ENCODE measurements at regions of chr1 and their contacts with region 1.

Region 1: GRCh38 chr1:205775015-205775716 is at the start of gene RAB29:
- DNase-seq: peak; percentile 70 to 95 (median 80)
- ATAC-seq: peak; percentile 89
- H3K4me3 ChIP-seq: peak within 1 kb of the TSS; percentile 78
- H3K4me3 Mint-ChIP-seq: peak within 1 kb of the TSS; percentile 96
- H3K27ac ChIP-seq: peak within 1 kb of the TSS; percentile 87 to 90
- H3K27ac Mint-ChIP-seq: peak within 1 kb of the TSS; percentile 97
- H3K4me1 ChIP-seq: peaks cover 37% of the 10 kb centered on the region
- H3K4me1 Mint-ChIP-seq: peaks cover 61% of the 10 kb centered on the region
- H3K27me3 ChIP-seq: no peaks in the 10 kb centered on the region
- H3K27me3 Mint-ChIP-seq: no peaks in the 10 kb centered on the region
- CTCF ChIP-seq: no peak
- total RNA-seq, gene RAB29: 11.7 to 11.8 TPM

Region 2: DNA sequence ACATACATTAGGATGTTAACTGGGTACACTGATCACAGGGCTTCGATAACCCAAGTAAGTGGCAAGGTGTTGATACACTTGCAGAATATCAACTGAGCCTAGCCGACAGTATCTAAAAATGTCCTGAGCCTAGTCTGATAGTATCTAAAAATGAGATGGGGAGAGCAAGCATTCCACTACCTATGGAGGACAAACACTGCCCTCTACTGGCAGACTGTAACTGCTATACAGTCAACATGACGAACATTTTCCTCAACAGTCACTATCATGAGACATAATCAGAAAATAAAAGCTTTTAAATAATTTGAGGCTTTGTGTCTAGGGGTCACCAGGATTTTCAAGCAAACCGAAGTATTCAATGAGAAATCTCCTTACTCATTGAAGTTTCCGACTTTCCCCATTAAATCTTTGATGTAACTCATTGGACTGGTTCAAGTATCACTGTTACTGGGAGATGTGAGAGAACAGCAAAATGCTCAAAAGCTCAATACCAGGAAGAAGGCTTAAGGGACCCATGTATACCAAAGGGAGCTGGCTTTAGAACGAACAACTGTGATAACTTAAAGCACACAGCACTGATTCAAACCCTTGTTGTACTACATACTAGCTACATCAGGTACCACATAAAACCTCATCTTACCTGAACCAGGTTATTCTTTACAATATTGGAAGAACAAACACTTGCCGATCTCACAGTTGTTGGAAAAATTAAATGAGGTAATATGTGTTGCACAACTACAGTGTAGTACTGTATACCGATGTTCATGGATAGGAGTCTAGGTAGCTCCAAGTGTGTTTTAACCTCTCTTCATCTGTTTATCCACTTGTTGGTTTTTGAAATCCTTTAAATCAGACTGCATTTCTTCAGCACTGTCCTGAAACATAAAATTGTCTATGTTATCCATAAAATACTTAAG is 63.8 kb before region 1 on chr1:
- CTCF ChIA-PET with region 1: interaction called, 11 read pairs
- POLR2A ChIA-PET with region 1: interaction called, 12 read pairs
- intact Hi-C with region 1: loop called (anchors 2 to 5 kb)
- DNase-seq: peak in 12 of 14 experiments; percentile 16 to 87 (median 47)
- ATAC-seq: peak; percentile 95
- H3K4me3 ChIP-seq: no peak overlapping the region
- H3K4me3 Mint-ChIP-seq: no peak overlapping the region
- H3K27ac ChIP-seq: no peak overlapping the region
- H3K27ac Mint-ChIP-seq: peak overlapping the region; percentile 47
- H3K4me1 ChIP-seq: no peaks in the 10 kb centered on the region
- H3K4me1 Mint-ChIP-seq: peaks cover 40% of the 10 kb centered on the region
- H3K27me3 ChIP-seq: no peaks in the 10 kb centered on the region
- H3K27me3 Mint-ChIP-seq: no peaks in the 10 kb centered on the region
- CTCF ChIP-seq: peak; percentile 91

Region 3: DNA sequence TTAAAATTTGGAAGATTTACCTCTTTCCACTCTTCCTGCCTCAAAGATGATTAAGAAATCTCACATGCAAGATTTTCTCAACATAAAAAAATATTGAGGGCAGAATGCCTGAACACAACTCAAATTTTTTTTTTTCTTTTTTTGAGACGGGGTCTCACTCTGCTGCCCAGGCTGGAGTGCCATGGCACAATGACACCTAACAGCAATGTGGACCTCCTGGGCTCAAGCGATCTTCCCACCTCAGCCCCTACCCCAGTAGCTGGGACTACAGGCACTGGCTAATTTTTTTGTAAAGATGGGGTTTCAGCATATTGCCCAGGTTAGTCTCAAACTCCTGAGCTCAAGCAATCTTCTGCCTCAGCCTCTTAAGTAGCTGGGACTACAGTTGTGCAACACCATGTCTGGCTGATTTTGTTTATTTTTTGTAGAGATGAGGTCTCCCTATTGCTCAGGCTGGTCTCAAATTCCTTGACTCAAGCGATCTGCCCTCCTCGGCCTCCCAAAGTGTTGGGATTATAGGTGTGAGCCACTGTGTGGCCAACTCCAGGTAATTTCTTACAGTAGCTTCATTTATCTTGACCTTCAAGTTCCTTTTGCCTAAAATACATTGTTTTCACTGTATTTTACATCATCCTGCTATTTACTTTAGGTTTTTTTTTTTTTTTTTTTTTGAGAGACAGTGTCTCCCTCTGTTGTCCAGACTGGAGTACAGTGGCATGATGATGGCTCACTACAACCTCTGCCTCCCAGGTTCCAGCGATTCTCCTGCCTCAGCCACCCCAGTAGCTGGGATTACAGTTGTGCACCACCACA is 35.6 kb before region 1 on chr1:
- CTCF ChIA-PET with region 1: interaction called, 3 read pairs
- POLR2A ChIA-PET with region 1: interaction called, 5 read pairs
- intact Hi-C with region 1: loop called in 1 of 2 experiments (anchors 5 kb)
- DNase-seq: no peak
- ATAC-seq: no peak
- H3K4me3 ChIP-seq: no peak overlapping the region
- H3K4me3 Mint-ChIP-seq: no peak overlapping the region
- H3K27ac ChIP-seq: no peak overlapping the region
- H3K27ac Mint-ChIP-seq: no peak overlapping the region
- H3K4me1 ChIP-seq: no peaks in the 10 kb centered on the region
- H3K4me1 Mint-ChIP-seq: peaks cover 56% of the 10 kb centered on the region
- H3K27me3 ChIP-seq: no peaks in the 10 kb centered on the region
- H3K27me3 Mint-ChIP-seq: no peaks in the 10 kb centered on the region
- CTCF ChIP-seq: no peak

Region 4: DNA sequence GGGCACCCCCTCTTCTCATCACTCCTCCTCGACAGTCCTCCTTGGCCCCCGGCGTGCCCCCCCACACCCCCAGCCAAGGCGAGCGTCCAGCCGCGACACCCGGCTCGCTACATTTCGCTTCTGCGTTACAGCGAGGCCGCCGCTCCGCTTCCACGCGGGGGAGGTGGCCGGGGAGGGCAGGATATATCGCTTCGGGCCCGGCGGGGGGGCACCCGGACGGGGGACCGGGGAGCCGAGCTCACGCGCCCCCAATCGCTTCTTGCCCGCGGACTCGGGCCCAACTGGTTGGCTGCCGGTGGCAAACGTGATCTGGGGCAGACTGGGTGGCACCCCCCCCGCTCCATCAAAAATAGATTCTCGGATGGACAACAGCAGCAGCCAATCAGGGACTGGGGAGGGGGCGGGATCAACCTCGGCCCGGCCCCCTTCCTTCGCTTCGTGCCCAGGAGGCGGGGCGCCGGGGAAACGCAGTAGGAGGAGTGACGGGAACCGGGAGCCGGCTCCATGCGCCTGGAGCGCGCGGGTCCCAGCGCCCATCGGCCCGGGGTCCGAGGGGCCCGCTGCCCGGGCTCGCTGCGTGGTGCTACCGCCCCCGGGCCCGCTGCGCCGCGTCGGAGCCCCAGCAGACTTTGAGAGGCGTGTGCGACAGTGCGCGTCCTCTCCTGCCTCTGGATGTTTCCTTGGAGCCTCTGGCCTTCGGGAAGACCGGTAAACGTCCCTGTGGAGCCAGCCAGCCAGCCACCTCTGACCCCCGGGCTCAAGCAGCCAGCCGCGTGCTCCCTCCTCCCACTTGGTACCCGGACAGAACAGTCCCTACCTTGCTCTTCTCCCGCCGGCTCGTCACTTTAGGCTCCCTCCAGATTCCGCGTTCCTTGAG is 38.0 kb after region 1 on chr1 and contains the start of gene SLC41A1:
- CTCF ChIA-PET with region 1: no interaction called
- POLR2A ChIA-PET with region 1: interaction called, 21 read pairs
- intact Hi-C with region 1: loop called (anchors 1 to 2 kb)
- DNase-seq: peak; percentile 85 to 97 (median 90)
- ATAC-seq: peak; percentile 95
- H3K4me3 ChIP-seq: peak within 1 kb of the TSS; percentile 97
- H3K4me3 Mint-ChIP-seq: peak within 1 kb of the TSS; percentile 97
- H3K27ac ChIP-seq: peak within 1 kb of the TSS; percentile 19 to 60
- H3K27ac Mint-ChIP-seq: peak within 1 kb of the TSS; percentile 85
- H3K4me1 ChIP-seq: peaks cover 53% of the 10 kb centered on the region
- H3K4me1 Mint-ChIP-seq: peaks cover 60% of the 10 kb centered on the region
- H3K27me3 ChIP-seq: no peaks in the 10 kb centered on the region
- H3K27me3 Mint-ChIP-seq: no peaks in the 10 kb centered on the region
- CTCF ChIP-seq: no peak
- total RNA-seq, gene SLC41A1: 23.8 to 26.4 TPM

Region 5: DNA sequence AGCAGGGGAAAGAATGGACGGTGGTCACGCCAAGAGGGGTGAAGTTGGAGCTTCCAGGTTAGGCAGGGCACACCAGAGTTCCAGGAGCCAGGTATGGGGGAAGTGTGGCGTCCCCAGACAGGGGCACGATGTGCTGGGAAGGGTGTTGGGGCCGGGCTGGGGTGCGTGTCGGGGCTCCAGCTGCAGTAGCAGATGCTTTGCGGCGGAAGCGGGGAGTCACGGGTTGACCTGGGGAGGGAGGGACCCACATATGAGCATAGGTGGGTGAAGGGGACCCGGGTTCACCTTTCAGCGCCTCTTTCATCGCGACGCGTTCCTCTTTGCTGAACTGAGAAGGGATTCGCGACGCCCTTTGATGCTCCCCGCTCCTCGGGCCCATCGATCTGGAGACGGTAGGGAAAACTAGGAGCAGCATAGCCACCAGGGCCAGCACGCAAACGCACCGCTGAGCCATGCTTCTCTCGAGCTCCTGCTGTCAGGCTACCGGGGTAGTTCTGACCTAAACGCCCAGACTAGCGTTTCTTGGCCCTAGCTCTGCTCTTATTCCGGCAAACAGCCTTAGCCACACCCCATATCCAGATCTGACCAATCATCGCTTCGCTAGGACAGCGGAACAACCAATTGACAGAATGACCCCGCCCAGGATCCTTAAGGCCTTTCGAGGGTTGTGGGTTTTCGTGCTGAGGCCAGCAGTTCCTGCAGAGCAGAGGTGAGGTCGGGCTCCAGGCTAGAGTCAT is 74.6 kb after region 1 on chr1 and contains the start of gene PM20D1:
- CTCF ChIA-PET with region 1: no interaction called
- POLR2A ChIA-PET with region 1: interaction called, 12 read pairs
- intact Hi-C with region 1: no loop called
- DNase-seq: peak; percentile 52 to 96 (median 77)
- ATAC-seq: peak; percentile 97
- H3K4me3 ChIP-seq: peak within 1 kb of the TSS; percentile 64
- H3K4me3 Mint-ChIP-seq: peak within 1 kb of the TSS; percentile 96
- H3K27ac ChIP-seq: peak within 1 kb of the TSS; percentile 44 to 67
- H3K27ac Mint-ChIP-seq: peak within 1 kb of the TSS; percentile 85
- H3K4me1 ChIP-seq: peaks cover 16% of the 10 kb centered on the region
- H3K4me1 Mint-ChIP-seq: peaks cover 17% of the 10 kb centered on the region
- H3K27me3 ChIP-seq: no peaks in the 10 kb centered on the region
- H3K27me3 Mint-ChIP-seq: no peaks in the 10 kb centered on the region
- CTCF ChIP-seq: no peak
- total RNA-seq, gene PM20D1: 1.2 to 1.4 TPM

Measured in CD4-positive, alpha-beta T cell (primary cell).